ENCODE measurements at regions of chr12 and their contacts with region 1.

Region 1: GRCh38 chr12:15320643-15321280 is 1.5 kb upstream of the PTPRO start:
- DNase-seq: no peak
- H3K27ac ChIP-seq: no peak overlapping the region
- CTCF ChIP-seq: no peak

Region 2: DNA sequence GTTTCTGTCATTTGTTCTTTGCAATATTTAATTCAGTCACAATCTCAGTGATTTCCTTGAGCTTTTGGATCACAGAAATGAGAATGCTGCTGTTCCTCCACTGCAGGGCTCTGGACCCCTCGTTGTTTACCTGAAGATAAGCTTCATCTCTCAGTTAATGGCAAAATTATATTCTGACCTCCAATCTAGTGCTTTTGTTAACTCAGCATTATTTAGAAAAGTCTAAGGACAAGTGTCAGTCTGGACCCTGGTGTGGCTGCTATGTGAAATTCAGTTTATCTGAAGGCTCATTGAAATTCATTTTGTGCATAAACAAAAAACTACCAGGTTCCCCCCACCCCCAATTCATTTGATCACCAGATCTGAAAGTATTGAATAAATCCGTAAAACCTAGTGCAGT is 86.3 kb after region 1 on chr12:
- CTCF ChIA-PET with region 1: no interaction called
- POLR2A ChIA-PET with region 1: interaction called, 10 read pairs
- DNase-seq: no peak
- H3K27ac ChIP-seq: no peak overlapping the region
- CTCF ChIP-seq: no peak